Left cardiac atrium (tissue), 4 donors: ENCODE measurements at regions of chr19 and their contacts with region 1.

Region 1: GRCh38 chr19:45569619-45570421 is 14.8 kb downstream of the OPA3 start:
- DNase-seq: peak; percentile 41
- ATAC-seq: peak; percentile 67 to 74

Region 2: DNA sequence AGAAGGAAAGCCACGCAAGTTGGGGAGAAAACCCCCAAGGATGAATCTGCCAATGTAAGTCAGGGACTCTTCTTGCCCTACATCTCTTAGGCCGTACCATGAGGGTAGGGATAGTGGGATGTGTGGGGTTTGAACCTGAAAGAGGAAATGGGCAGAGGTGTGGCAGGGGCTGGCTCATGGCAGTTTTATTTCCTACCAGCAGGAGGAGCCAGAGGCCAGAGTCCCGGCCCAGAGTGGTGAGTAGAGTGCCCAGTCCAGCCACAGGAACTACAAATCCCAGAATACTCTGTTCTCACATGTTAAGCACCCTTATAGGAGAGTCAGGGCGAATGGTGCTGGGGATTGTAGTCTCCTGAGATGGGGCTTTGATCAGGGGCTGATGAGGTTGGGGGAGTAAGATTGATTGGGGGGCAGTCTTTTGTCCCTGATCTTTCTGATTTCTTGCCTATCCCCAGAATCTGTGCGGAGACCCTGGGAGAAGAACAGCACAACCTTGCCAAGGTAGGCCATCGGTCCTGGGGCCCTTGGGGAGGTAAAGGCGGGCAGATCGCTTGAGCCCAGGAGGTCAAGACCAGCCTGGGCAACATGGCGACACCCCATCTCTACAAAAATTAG is 46.1 kb before region 1 on chr19:
- intact Hi-C with region 1: loop called in 1 of 2 experiments (anchors 5 kb)
- DNase-seq: peak; percentile 77
- ATAC-seq: peak; percentile 89 to 95